ENCODE measurements at regions of chr16 and their contacts with region 1.

Region 1: DNA sequence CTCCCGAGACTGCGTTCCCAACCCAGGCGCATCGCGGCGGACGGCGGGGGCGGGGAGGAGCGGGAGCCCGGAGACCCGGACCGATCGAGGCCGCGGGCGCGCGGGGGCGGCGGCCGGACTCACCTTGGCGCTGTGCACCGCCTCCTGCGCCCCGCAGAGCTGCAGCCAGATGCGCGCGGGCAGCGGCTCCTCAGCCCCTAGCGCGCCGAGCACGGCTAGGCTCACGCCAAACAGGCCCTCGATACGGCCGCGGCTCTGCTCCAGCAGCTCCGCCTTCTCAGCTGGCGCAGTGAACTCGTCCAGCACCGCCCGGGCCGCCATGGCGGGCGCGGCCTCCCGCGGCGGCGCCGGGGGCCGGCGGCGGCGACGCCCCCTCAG is 339 bp downstream of the N4BP1 start:
- DNase-seq: peak; percentile 40
- H3K4me3 Mint-ChIP-seq: peak overlapping the region; percentile 85
- H3K27ac Mint-ChIP-seq: peak overlapping the region; percentile 89
- H3K4me1 Mint-ChIP-seq: peaks cover 37% of the 10 kb centered on the region
- H3K27me3 Mint-ChIP-seq: no peaks in the 10 kb centered on the region

Region 2: DNA sequence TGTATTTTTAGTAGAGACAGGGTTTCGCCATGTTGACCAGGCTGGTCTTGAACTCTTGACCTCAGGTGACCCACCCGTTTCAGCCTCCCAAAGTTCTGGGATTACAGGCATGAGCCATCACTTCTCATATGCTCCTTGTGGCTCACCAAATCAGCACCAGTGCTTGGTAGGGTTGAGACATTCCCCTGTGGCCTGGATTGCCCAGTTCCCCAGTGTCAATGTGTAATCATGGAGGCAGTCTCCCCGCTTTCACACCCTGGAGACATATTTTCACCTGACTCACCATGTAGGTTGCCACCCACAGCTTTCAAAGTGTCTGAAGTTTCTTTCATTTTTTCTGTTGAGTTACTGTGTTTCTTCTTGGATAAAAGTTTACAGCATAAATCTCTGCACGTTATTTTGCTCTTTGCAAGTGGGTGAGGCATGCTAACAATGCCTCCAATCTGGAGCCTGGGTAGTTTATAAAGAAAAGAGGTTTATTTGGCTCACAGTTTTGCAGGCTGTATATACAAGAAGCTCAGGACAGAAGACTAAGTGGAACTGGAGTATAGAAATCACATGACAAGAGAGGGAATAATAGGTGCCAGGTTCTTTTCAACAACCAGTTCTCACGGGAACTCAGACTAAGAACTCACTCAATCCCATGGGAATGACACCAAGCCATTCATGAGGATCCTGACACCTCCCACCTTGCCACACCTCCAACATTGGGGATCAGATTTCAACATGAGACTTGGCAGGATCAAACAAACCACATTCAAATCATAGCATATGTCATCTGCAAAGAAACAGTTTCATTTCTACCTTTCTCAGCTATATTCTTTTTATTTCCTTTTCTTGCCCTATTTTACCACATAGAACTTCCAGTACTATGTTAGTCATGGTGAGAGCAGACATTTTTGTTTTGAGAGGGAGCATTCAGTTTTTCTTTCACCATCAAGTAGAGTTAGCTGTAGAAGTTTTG is 1035.3 kb before region 1 on chr16:
- CTCF ChIA-PET with region 1: no interaction called
- intact Hi-C with region 1: loop called (anchors 2 kb)
- DNase-seq: peak; percentile 70
- H3K4me3 Mint-ChIP-seq: no peak overlapping the region
- H3K27ac Mint-ChIP-seq: peak overlapping the region; percentile 86
- H3K4me1 Mint-ChIP-seq: peaks cover 56% of the 10 kb centered on the region
- H3K27me3 Mint-ChIP-seq: no peaks in the 10 kb centered on the region

Region 3: DNA sequence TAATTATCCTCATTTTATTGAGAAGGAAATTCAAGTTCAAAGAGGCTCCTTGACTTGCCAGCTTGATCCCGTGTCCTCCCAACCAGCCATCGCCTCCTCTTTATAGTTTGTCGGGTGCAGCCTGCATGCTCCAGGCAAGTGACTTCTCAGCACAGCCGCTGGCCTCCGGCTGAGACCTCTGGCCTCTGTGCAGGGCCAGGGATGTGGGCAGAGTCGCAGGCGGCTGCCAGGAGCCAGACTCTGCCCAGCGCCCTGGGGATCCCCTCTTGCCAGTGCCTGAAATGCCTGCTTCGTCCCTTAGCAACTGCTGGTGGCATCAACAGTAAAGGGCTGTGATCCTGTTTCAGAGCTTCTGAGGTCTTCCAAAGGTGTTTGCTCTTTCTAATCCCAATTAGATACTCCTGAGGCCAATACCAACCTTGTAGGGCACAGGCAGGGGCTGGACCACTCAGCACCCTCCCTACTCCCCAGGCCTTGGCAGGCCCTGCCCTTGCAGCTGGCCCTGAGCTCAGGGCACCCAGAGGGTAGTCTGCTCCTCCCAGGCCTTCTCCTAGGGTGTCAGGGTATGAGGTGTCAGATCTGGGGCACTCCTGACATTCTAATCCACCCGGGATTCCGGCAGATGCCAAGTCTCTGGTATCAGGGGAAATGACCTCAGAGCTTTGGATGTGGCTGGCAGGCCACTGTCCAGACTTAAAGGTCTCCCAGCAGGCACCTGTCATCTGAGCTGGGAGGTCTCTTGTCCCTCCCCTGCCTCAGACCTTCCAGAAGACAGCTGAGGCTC is 156.5 kb before region 1 on chr16:
- CTCF ChIA-PET with region 1: no interaction called
- intact Hi-C with region 1: loop called (anchors 1 kb)
- DNase-seq: no peak
- H3K4me3 Mint-ChIP-seq: no peak overlapping the region
- H3K27ac Mint-ChIP-seq: no peak overlapping the region
- H3K4me1 Mint-ChIP-seq: peaks cover 12% of the 10 kb centered on the region
- H3K27me3 Mint-ChIP-seq: peaks cover 8% of the 10 kb centered on the region

Region 4: GRCh38 chr16:48576927-48577326 is 32.7 kb before region 1 on chr16:
- CTCF ChIA-PET with region 1: no interaction called
- intact Hi-C with region 1: loop called (anchors 1 kb)
- DNase-seq: peak; percentile 66
- H3K4me3 Mint-ChIP-seq: no peak overlapping the region
- H3K27ac Mint-ChIP-seq: peak overlapping the region; percentile 56
- H3K4me1 Mint-ChIP-seq: peaks cover 59% of the 10 kb centered on the region
- H3K27me3 Mint-ChIP-seq: no peaks in the 10 kb centered on the region

Region 5: DNA sequence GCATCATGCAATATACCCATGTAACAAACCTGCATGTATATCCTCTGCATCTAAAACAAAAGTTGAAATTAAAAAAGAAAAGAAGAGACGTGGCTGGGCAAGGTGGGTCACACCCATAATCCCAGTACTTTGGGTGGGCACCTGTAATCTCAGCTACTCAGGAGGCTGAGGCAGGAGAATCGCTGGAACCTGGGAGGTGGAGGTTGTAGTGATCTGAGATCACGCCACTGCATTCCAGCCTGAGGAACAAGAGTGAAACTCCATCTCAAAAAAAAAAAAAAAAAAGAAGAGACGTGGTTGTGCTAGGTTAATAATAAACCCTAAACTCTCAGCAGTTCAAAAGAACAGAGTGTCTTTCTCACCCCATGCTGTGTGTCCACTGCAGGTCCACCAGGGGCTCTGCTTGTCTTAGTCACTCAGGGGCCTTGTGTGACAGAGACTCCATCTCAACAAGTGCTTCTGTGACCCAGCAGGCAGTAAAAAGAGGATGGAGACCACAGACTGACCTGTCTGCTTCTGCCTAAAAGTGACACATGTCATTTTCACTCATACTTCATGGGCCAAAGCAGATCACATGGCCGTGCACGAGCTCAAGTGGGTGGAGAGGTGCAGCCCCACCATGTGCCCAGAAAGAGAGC is 22.6 kb after region 1 on chr16:
- CTCF ChIA-PET with region 1: interaction called, 24 read pairs
- intact Hi-C with region 1: no loop called
- DNase-seq: no peak
- H3K4me3 Mint-ChIP-seq: no peak overlapping the region
- H3K27ac Mint-ChIP-seq: no peak overlapping the region
- H3K4me1 Mint-ChIP-seq: peaks cover 11% of the 10 kb centered on the region
- H3K27me3 Mint-ChIP-seq: peaks cover 3% of the 10 kb centered on the region

Measured in activated naive CD4-positive, alpha-beta T cell treated with anti-CD3 and anti-CD28 coated beads for 36 hours (primary cell).